ENCODE measurements at regions of chr7 and their contacts with region 1.

Region 1: GRCh38 chr7:90708841-90709317 is 112.8 kb downstream of the CDK14 start:
- DNase-seq: peak; percentile 45 to 84 (median 80)
- H3K4me3 ChIP-seq: no peak overlapping the region
- H3K27ac ChIP-seq: no peak overlapping the region
- H3K4me1 ChIP-seq: no peaks in the 10 kb centered on the region
- H3K27me3 ChIP-seq: no peaks in the 10 kb centered on the region

Region 2: DNA sequence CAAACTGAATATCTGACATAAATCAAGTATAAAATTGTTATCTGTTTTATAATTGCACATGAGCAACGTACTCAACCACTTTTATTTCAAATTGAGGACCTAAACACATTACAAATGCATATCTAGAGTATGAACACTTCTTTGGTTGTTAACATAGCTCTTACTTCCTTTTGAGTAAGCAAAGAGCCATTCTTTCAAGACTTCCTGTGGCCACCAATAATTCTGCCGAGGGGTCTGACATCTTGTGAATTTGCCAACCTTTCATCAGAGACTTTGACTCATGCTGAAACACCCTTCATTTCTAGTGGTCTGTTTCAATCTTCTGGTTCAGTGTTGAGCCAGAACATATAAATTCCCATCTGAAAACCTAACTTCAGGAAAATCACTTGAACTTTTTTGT is 53.3 kb before region 1 on chr7:
- CTCF ChIA-PET with region 1: no interaction called
- POLR2A ChIA-PET with region 1: no interaction called
- DNase-seq: no peak
- H3K4me3 ChIP-seq: no peak overlapping the region
- H3K27ac ChIP-seq: no peak overlapping the region
- H3K4me1 ChIP-seq: no peaks in the 10 kb centered on the region
- H3K27me3 ChIP-seq: no peaks in the 10 kb centered on the region

Region 3: DNA sequence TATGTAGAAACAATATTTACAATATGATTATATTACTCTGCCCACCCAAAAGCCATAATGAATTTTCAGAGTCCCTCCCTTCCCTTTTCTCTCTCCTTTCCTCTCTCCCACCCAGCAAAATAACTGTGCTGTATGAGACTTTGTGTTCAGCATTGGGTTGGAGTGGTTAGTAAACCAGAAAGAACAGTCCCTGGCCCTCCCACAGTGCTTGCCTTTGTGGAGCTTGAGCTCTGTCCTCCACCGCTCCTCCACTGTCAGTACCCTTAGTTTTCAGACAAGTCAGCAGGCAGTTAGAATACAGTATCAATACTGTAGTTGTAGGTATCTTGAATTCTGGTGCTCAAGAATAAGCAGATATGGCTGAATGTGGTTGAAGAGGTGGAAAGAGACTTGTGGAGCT is 20.1 kb before region 1 on chr7:
- CTCF ChIA-PET with region 1: no interaction called
- POLR2A ChIA-PET with region 1: no interaction called
- DNase-seq: no peak
- H3K4me3 ChIP-seq: no peak overlapping the region
- H3K27ac ChIP-seq: no peak overlapping the region
- H3K4me1 ChIP-seq: no peaks in the 10 kb centered on the region
- H3K27me3 ChIP-seq: no peaks in the 10 kb centered on the region

Region 4: DNA sequence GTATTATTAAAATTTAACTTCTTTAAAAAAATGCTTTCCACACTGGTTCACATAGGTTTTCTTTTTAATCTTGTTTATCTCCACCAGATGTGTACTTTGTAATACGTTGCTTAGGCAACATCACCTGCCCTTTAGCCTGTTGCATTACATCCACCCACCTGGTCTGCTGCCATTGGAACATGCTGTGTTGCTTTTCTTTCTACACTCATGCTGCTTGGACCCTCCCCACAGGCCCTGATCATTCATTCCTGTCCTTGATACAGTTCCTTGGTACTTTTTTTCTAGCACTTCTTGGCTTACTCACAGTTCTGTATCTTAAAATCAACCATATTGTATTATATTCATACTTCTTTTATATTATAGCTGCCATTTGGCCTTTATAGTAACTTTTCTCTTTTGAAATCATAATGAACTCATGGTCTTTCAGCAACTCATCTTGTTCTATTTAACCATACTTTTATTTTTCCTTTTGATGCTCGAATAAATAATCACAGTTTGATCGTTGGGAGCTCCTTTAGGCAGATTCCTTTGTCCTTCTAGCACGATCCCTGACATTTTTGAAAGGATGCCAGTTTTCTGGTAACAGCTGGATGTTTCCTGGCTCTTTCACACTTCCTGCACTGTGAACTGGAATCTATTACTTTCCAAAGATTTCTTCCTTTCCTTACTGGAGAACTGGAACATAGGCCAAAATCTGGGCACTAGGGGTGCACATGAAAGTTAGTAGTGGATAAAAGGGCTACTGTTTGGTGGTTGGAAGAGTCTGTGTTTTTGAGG is 12.3 kb after region 1 on chr7:
- CTCF ChIA-PET with region 1: interaction called, 9 read pairs
- POLR2A ChIA-PET with region 1: interaction called, 10 read pairs
- DNase-seq: no peak
- H3K4me3 ChIP-seq: no peak overlapping the region
- H3K27ac ChIP-seq: no peak overlapping the region
- H3K4me1 ChIP-seq: peaks cover 0 to 3% (median 1%) of the 10 kb centered on the region in 4 experiments
- H3K27me3 ChIP-seq: no peaks in the 10 kb centered on the region